Mammary epithelial cell (primary cell): ENCODE measurements at regions of chr18 and their contacts with region 1.

Region 1: DNA sequence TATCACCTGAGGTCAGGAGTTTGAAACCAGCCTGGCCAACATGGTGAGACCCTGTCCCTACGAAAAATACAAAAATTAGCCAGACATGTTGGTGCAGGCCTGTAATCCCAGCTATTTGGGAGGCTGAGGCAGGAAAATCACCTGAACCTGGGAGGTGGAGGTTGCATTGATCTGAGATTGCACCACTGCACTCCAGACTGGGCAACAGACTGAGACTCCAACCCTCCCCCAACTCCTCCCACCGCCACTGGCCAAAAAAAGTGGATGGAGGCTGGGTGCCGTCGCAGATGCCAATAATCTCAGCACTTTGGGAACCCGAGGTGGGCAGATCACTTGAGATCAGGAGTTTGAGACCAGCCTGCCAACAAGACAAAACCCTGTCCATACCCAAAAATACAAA is 10.1 kb upstream of the SPIRE1 start:
- DNase-seq: no peak
- H3K4me3 ChIP-seq: no peak overlapping the region
- H3K27ac ChIP-seq: no peak overlapping the region
- H3K4me1 ChIP-seq: no peaks in the 10 kb centered on the region
- H3K27me3 ChIP-seq: no peaks in the 10 kb centered on the region
- CTCF ChIP-seq: no peak

Region 2: DNA sequence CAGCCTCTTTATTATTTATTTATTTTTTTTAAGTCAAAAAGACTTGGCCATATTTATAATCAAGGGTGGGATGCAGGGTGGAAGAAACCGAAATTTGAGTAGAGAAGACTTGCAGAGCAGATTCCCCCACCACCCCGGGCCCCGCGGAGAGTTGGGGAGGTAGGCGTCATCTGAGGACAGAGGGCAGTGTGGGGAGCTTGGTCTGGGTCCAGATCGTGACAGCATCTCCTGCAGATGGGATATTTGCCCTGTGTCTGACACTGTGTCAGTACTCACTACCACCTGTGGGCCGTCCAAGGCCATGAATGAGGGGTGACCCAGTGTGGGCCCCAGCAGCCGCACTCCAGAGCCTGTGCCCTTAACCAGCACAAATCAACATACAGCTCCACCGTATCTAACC is 270.8 kb before region 1 on chr18:
- CTCF ChIA-PET with region 1: no interaction called
- dilution Hi-C with region 1: no loop called
- in situ Hi-C with region 1: loop called in 1 of 2 experiments (anchors 5 kb)
- intact Hi-C with region 1: no loop called
- DNase-seq: no peak
- H3K4me3 ChIP-seq: no peak overlapping the region
- H3K27ac ChIP-seq: no peak overlapping the region
- H3K4me1 ChIP-seq: no peaks in the 10 kb centered on the region
- H3K27me3 ChIP-seq: no peaks in the 10 kb centered on the region
- CTCF ChIP-seq: no peak

Region 3: DNA sequence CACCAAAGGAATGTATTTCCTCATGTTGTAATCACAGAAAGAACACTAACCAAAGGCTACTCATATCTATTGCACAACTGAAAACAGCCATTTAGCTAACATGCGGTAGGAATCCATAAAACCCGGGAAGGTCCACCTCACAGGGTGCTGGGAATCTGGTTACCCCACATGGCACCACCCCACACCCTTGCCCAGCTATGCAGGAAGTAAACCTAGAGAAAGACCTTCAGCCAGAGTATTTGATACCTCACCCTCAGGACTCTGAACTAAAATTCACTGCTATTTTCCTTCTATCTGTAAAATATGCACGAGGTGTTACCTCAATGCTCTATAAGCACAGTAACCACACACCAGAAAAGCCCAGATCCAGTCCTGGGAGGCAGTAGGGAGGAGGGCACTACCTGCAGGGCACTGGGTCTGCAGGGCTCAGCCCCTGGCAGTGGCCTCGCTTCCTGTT is 170.2 kb after region 1 on chr18:
- CTCF ChIA-PET with region 1: no interaction called
- dilution Hi-C with region 1: no loop called
- in situ Hi-C with region 1: no loop called
- intact Hi-C with region 1: no loop called
- DNase-seq: peak; percentile 94
- H3K4me3 ChIP-seq: peak overlapping the region in 1 of 3 experiments; percentile 30
- H3K27ac ChIP-seq: peak overlapping the region; percentile 93
- H3K4me1 ChIP-seq: peaks cover 17% of the 10 kb centered on the region
- H3K27me3 ChIP-seq: no peaks in the 10 kb centered on the region
- CTCF ChIP-seq: no peak